Activated CD8-positive, alpha-beta T cell treated with anti-CD3 and anti-CD28 coated beads, Interleukin-2, amount 10 ng/mL, durations not matched to agents 7 days and 5 days (primary cell): ENCODE measurements at regions of chr15 and their contacts with region 1.

Region 1: GRCh38 chr15:74407055-74407691 is 26.6 kb downstream of the SEMA7A start:
- DNase-seq: no peak
- ATAC-seq: no peak
- H3K4me3 Mint-ChIP-seq: no peak overlapping the region
- H3K27ac Mint-ChIP-seq: peak overlapping the region; percentile 35
- H3K4me1 Mint-ChIP-seq: peaks cover 33% of the 10 kb centered on the region
- H3K27me3 Mint-ChIP-seq: no peaks in the 10 kb centered on the region

Region 2: DNA sequence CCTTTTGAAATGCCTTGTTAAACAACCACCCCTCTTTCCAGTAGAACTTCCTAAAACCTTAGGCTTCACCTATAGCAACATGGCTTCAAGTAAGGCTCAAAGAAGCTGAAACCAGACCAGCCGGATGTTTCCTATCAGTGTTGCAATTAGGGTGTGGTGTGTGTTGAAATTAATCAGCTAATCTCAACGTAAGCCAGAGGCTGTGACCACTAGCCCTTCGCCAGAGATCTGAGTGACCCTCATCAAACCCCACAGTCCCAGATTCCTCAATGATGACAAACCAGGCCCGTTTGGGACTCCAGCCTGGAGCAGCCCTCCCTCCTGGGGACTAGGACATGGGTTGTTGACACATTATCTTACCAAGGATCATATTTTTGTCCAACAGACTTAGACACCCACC is 67.0 kb before region 1 on chr15:
- CTCF ChIA-PET with region 1: no interaction called
- POLR2A ChIA-PET with region 1: no interaction called
- DNase-seq: no peak
- ATAC-seq: no peak
- H3K4me3 Mint-ChIP-seq: no peak overlapping the region
- H3K27ac Mint-ChIP-seq: no peak overlapping the region
- H3K4me1 Mint-ChIP-seq: no peaks in the 10 kb centered on the region
- H3K27me3 Mint-ChIP-seq: peaks cover 5% of the 10 kb centered on the region

Region 3: DNA sequence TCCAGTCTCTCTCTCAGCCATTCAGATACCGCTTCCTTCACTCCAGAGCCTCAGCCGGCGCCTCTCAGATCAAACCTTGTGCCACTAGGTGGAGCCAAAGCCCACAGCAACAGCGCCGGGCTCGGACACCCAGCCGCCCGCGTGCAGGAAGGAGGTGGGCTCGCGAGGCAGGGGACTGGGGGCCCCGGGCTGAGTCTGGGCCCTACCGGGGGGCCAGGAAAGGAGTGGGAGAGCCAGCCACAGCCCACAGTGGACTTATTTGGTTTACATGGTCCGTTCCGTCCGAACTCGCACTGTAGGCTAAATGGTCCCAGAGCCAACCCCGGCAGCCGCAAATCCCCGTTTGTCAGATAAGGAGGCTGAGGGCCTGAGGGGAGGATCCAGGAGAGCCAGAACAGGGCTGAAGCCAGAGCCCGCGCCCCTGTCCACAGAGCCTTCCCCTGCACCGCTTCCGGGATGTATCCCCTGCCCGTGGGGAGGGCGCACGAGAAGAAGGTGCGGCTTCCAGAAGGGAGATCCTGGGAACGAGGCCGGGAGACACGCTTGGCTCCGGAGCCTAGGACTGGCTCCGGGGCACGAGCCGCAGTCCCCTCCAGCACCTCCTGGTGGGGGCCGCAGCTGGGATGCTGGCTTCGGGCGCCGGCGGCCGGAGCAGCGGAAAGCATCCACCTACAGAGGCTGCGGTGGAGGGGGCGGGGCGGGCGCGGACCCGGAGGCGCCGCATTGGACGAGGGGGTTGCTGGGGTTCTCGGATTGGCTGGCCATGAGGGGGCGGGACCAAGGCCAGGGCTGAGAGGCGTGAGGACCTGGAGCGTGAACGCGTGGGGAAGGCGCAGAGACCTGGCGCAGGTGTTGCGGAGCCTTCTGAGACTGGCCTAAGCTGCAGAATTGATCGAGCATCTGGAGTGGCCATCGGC is 33.2 kb before region 1 on chr15:
- CTCF ChIA-PET with region 1: interaction called, 31 read pairs
- POLR2A ChIA-PET with region 1: interaction called, 3 read pairs
- DNase-seq: peak; percentile 97
- ATAC-seq: peak; percentile 97
- H3K4me3 Mint-ChIP-seq: peak overlapping the region; percentile 77
- H3K27ac Mint-ChIP-seq: peak overlapping the region; percentile 75
- H3K4me1 Mint-ChIP-seq: peaks cover 25% of the 10 kb centered on the region
- H3K27me3 Mint-ChIP-seq: peaks cover 18% of the 10 kb centered on the region

Region 4: DNA sequence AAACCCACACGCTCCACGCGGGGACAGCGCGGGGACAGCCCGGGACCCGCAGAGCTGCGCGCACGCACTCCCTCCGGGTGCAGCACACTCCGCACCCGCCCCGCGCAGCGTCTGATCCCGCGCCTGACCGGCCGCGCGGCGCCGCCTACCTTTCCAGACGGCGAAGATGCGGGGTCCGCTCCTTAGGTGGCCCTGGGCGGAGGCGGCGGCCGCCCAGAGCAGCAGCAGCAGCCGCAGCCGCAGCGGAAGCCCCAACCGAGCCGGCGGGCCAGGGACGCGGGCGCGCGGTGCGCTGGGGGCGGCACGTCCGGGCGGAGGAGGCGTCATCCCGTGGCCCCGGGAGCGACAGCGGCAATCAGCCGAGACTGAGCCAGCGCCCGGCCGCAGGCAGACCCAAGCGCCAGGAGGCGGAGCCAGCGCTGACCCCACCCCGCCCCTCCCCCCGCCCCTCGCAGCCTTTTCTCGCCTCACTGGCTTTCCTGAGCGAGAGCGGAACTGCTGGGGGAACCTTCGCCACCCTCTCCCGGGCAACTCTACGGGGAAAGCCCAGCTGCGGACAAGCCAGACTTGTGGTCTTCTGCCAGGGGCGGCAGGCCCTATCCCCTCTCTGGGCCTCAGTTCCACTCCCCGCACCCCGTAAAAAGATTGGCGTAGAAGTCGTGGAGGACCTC is 26.6 kb after region 1 on chr15 and contains the start of gene SEMA7A:
- CTCF ChIA-PET with region 1: interaction called, 39 read pairs
- POLR2A ChIA-PET with region 1: interaction called, 29 read pairs
- DNase-seq: peak; percentile 88
- ATAC-seq: peak; percentile 90
- H3K4me3 Mint-ChIP-seq: peak within 1 kb of the TSS; percentile 83
- H3K27ac Mint-ChIP-seq: peak within 1 kb of the TSS; percentile 88
- H3K4me1 Mint-ChIP-seq: peaks cover 76% of the 10 kb centered on the region
- H3K27me3 Mint-ChIP-seq: no peaks in the 10 kb centered on the region
- total RNA-seq, gene SEMA7A: 16.1 to 16.9 TPM

Region 5: DNA sequence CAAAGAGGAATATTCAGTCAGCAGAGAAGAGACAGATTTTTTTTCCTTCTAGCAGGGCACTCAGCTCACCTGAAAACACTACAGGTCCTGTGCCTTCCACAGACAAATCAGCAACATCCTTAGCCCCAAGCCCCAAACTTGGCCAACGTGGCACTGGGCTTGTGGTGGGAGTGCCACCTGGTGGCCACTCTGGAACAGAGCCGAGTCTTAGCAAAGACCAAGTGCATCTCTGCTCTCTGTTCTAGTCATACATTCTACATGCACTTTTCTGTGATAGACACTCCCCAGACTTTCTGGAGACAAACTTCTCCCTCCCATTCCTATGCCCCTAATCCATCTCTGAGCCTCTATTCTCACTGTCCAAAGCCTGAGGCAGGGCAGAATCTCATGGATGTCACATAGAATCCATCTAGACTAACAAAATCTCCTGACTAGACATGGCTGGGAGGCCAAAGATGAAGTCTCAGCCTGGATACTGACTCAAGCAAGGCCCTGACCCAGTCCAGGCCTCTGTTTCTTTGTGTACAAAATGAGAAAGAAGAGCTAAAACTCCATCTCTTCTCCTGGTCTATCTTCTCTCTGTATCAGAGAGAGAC is 31.6 kb after region 1 on chr15:
- CTCF ChIA-PET with region 1: interaction called, 39 read pairs
- POLR2A ChIA-PET with region 1: interaction called, 15 read pairs
- DNase-seq: peak; percentile 88
- ATAC-seq: peak; percentile 72
- H3K4me3 Mint-ChIP-seq: no peak overlapping the region
- H3K27ac Mint-ChIP-seq: no peak overlapping the region
- H3K4me1 Mint-ChIP-seq: peaks cover 55% of the 10 kb centered on the region
- H3K27me3 Mint-ChIP-seq: no peaks in the 10 kb centered on the region

Region 6: DNA sequence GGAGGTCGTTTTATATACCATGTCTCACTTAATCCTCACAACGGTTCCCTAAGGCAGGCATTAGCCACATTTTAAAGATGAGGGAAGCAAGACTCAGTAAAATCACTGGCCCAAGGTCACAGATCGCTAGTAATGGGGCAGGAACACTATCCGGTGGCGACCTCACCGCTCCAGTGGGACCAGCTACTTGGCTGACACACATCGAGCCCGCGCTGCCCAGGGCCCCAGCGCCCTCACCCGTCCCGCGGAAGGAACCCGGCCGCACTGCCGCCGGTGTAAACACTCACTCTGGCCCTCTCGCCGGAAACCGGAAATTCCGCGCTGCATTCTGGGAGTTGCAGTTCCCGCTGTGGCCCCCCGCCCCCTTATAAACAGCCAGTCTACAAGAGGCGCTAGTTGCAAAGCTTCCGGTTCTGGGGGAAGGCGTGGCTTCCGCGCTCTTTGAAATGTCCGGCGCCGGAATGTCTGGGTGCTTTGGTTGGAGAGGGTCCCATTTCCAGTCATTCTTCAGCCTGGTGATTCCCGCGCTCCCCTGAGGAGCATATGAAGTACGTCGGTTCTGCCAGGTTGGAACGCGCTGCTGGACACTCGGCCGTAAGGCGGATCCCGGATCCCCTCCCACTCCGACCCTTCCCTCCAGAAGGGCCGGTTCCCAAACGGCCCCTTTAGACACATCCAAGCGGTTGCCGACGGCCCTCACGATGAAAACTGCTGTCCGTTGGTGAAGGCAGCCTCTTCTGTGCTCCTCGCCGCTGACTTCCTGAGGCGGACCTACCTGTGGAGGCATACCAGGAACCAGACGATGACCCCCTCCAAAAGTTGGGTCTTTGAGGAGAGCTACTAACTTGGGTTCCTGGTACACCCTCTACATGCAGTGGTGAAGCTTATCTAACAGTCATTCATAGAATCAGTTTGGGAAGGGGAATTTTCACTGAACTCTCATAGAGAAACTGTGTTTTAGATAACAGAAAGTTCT is 54.0 kb after region 1 on chr15 and contains the start of gene UBL7:
- CTCF ChIA-PET with region 1: interaction called, 3 read pairs
- POLR2A ChIA-PET with region 1: interaction called, 21 read pairs
- DNase-seq: peak; percentile 99
- ATAC-seq: peak; percentile 95
- H3K4me3 Mint-ChIP-seq: peak within 1 kb of the TSS; percentile 89
- H3K27ac Mint-ChIP-seq: peak within 1 kb of the TSS; percentile 81
- H3K4me1 Mint-ChIP-seq: peaks cover 54% of the 10 kb centered on the region
- H3K27me3 Mint-ChIP-seq: no peaks in the 10 kb centered on the region
- total RNA-seq, gene UBL7: 60.8 to 71.4 TPM